ENCODE measurements at regions of chr1 and their contacts with region 1.

Region 1: DNA sequence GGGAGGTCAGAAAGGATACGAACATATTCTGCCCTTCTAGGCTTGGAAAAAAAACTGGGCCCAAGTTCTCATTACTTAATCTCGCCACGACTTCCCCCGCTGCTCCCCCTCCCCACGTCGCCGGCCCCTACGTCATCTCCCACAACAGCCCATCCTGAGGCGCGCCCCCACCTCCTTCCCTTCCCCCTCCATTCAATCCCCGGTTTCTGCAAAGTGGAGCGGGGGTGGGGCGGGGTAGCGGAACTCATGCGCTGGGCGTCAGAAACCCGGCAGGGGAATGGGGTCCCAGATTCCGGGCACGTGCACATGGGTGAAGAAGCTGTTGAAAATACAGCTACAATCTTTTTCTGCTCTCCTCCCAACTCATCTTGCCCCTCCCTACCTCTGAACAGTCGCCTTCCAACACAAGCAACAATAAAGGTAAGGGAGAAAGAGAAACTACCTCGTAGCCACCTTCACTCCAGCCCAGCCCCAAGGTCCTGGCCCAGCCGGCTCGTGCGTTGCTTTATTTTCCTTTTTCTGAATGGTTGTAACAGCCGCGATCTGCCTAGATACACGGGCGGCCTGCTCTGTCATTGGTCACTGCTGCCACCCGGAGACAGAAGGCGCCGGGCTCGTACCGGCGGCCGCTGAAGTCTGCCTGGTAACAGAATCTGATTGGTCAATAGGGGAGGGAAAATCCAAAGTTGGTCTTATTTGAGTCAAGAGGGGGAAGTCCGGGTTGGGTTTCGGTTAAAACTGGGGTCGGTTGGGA is at the start of gene RFX5:
- DNase-seq: peak; percentile 97
- H3K4me3 Mint-ChIP-seq: peak within 1 kb of the TSS; percentile 89
- H3K27ac Mint-ChIP-seq: peak within 1 kb of the TSS; percentile 92
- H3K4me1 Mint-ChIP-seq: peaks cover 32% of the 10 kb centered on the region
- H3K27me3 Mint-ChIP-seq: no peaks in the 10 kb centered on the region
- total RNA-seq, gene RFX5: 64.7 to 68.7 TPM

Region 2: DNA sequence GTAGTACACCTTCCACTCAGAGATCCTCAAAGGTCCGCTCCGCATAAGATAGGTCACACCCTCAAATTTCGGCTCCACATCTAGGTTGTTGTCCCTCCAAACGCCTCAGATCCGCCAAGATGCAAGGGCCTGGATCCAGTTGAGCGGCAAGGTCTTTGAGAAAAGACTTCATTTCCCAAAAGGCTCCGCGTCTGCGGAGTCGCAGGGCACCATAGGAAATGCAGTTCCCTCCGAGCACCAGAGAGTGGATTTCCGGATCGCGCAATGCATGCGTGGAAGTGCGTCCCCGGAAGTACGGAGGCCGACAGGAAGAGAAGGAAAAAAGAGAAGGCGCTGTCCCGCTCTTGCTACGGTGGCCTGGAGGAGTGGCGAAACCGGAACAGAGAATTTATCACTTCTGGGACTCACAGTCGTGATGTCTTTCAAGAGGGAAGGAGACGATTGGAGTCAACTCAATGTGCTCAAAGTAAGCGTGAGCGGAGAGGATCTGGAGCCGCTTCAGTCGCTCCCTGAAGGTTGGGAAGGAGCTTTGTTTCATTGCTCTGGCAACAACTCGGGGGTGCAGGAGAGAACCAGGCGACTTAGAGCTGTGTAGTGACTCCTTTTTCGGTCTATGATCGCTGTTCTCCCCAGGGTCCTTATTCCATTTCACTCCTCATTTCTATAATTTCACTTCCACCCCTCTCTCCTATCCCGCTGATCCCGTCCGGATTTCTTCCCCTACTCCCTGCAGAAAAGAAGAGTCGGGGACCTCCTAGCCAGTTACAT is 181.0 kb before region 1 on chr1 and contains the starts of genes LYSMD1 and SCNM1:
- CTCF ChIA-PET with region 1: no interaction called
- POLR2A ChIA-PET with region 1: no interaction called
- intact Hi-C with region 1: no loop called
- DNase-seq: peak; percentile 99
- H3K4me3 Mint-ChIP-seq: peak within 1 kb of the TSS; percentile 92
- H3K27ac Mint-ChIP-seq: peak within 1 kb of the TSS; percentile 92
- H3K4me1 Mint-ChIP-seq: peaks cover 49% of the 10 kb centered on the region
- H3K27me3 Mint-ChIP-seq: peaks cover 2% of the 10 kb centered on the region
- total RNA-seq, gene LYSMD1: 1.8 to 2.6 TPM
- total RNA-seq, gene SCNM1: 67.5 to 67.8 TPM

Region 3: DNA sequence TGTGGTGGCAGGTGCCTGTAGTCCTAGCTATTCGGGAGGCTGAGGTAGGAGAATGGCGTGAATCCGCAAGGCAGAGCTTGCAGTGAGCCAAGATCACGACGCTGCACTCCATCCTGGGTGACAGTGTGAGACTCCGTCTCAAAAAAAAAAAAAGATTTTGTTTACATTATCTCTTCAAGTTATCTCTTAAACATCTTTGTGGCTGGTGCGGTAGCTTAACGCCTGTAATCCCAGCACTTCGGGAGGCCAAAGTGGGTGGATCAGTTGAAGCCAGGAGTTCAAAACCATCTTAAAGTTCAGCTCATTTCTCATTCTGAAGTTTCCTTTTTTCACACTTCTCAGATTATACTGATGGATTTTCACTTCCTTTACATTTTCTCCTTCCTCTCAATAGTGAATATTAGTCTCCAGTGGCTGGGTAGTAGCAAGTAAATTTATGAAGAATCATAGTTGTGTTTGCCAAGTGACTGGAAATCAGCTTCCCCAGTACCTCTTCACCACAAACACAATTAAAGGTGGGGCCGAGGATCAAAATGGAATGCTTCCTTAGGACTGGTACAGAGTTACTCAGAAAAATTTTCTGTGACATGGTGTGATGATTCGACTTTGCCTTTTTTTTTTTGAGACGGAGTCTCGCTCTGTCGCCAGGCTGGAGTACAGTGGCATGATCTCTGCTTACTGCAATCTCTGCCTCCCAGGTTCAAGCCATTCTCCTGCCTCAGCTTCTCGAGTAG is 134.8 kb before region 1 on chr1:
- CTCF ChIA-PET with region 1: no interaction called
- POLR2A ChIA-PET with region 1: no interaction called
- intact Hi-C with region 1: no loop called
- DNase-seq: peak; percentile 29
- H3K4me3 Mint-ChIP-seq: no peak overlapping the region
- H3K27ac Mint-ChIP-seq: peak overlapping the region; percentile 16
- H3K4me1 Mint-ChIP-seq: peaks cover 27% of the 10 kb centered on the region
- H3K27me3 Mint-ChIP-seq: no peaks in the 10 kb centered on the region

Region 4: DNA sequence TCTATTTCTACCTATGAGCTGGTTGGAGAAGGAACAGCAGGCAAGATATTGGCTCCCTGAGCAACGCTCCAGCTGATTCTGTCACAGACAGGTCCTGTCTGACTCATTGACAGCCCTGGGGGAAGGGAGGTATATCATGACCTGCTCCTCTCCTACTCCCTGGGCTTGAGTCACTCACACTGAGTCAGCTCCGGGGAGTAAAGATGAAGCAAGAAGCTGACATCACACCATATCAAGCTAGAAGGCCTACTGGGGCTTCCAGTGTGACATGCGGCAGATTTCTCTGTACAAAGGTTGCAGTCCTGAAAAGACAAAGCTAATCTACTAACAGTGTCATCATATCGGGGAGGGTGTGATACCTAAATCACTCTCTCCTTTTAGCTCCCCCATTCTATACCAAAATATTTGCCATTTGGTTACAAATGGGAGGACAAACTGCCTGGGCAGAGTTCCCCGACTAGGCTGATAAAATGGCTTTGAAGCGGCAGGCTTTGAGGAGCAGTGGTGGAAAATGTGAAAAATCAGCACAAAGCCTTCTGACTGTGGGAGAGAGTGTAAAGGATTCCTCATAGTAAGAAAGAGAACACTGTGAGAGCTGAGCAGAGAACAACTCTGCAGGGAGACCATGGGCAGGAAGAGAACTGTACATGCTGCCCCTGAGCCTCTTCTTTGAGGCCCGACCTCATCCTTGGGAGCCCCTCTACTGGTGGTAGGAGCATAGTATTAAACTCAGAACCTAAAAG is 35.2 kb before region 1 on chr1:
- CTCF ChIA-PET with region 1: interaction called, 88 read pairs
- POLR2A ChIA-PET with region 1: interaction called, 5 read pairs
- intact Hi-C with region 1: loop called (anchors 1 kb)
- DNase-seq: peak; percentile 91
- H3K4me3 Mint-ChIP-seq: peak overlapping the region; percentile 1
- H3K27ac Mint-ChIP-seq: peak overlapping the region; percentile 97
- H3K4me1 Mint-ChIP-seq: peaks cover 41% of the 10 kb centered on the region
- H3K27me3 Mint-ChIP-seq: no peaks in the 10 kb centered on the region

Region 5: DNA sequence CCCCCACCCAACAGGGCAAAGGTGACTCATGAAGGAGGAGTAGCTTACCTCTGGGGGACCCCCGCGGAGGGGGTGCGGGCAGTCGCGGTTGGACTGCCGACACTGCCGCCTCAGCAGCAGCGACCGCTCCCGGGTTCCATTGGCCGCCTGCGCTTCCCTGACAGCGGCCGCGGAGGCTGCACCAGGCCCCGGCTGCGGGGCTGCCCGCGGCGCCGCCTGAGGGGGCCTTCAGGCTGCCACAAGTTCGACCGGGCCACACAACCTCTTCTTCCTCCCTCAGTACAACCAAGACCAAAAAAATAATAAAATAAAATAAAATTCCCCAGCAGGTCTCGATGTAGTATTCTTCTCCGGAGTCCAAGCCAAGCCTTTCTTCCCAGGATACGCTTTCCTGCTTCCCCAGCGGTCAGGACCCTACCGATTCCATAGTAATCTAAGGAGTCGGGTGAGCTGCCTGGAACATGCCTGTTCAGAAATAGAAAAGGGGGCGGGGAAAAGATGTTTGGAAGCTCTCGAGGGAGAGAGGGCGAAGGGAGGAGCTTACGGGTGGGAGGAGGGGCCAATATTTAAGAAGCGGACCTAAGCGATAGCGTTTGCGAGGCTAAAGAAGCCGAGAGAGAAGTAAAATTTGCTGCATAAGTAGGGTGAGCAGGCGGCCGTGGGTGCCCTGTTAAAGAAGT is 19.6 kb before region 1 on chr1 and contains the start of gene PI4KB:
- CTCF ChIA-PET with region 1: interaction called, 3 read pairs
- POLR2A ChIA-PET with region 1: interaction called, 3 read pairs
- intact Hi-C with region 1: loop called (anchors 1 kb)
- DNase-seq: peak; percentile 93
- H3K4me3 Mint-ChIP-seq: peak within 1 kb of the TSS; percentile 95
- H3K27ac Mint-ChIP-seq: peak within 1 kb of the TSS; percentile 89
- H3K4me1 Mint-ChIP-seq: peaks cover 32% of the 10 kb centered on the region
- H3K27me3 Mint-ChIP-seq: no peaks in the 10 kb centered on the region
- total RNA-seq, gene PI4KB: 54.7 to 62.9 TPM

Region 6: GRCh38 chr1:151399890-151400495 is 53.0 kb after region 1 on chr1:
- CTCF ChIA-PET with region 1: no interaction called
- POLR2A ChIA-PET with region 1: interaction called, 3 read pairs
- intact Hi-C with region 1: loop called (anchors 1 kb)
- DNase-seq: peak; percentile 37
- H3K4me3 Mint-ChIP-seq: peak overlapping the region; percentile 88
- H3K27ac Mint-ChIP-seq: peak overlapping the region; percentile 95
- H3K4me1 Mint-ChIP-seq: peaks cover 29% of the 10 kb centered on the region
- H3K27me3 Mint-ChIP-seq: no peaks in the 10 kb centered on the region

Region 7: DNA sequence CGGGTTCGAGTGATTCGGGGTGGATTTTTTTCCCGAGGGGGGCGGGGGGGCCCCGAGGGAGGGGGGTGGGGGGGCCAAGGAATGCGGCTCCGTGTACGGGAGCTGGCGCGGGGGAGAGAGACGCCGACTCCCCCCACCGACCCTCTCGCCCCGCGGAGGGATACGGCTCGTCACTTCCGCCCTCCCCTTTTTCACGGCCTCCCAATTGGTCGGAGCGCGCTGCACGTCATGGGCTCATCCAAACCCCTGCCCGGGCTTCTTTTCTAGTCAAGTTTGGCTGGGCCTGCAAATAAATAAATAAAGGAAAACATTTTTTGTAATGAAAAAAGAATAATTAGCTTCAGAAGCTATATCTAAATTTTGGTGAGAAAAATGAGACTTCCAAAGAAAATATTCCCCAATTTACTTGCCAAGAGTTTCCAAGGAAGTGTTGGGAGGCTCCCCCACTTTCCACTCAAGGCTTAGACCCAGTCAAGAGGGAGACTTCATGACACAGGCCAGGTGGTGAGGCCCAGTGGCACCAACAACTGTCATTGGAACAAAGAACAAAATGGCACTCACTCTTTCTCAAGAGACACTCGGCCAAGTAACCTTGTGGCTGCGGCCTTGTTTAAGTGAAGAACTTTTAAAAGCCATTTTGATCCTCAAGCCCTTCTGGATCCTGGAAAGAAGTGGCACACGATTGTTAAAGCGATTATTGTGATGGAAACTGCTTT is 112.5 kb after region 1 on chr1 and contains the start of gene POGZ:
- CTCF ChIA-PET with region 1: no interaction called
- POLR2A ChIA-PET with region 1: no interaction called
- intact Hi-C with region 1: loop called (anchors 2 kb)
- DNase-seq: peak; percentile 96
- H3K4me3 Mint-ChIP-seq: peak within 1 kb of the TSS; percentile 85
- H3K27ac Mint-ChIP-seq: peak within 1 kb of the TSS; percentile 91
- H3K4me1 Mint-ChIP-seq: peaks cover 20% of the 10 kb centered on the region
- H3K27me3 Mint-ChIP-seq: peaks cover 16% of the 10 kb centered on the region
- total RNA-seq, gene POGZ: 73.7 to 76.3 TPM

Region 8: GRCh38 chr1:151762941-151763921 is 416.3 kb after region 1 on chr1 and contains the start of gene MRPL9:
- CTCF ChIA-PET with region 1: no interaction called
- POLR2A ChIA-PET with region 1: no interaction called
- intact Hi-C with region 1: loop called (anchors 10 kb)
- DNase-seq: peak; percentile 93
- H3K4me3 Mint-ChIP-seq: peak within 1 kb of the TSS; percentile 78
- H3K27ac Mint-ChIP-seq: peak within 1 kb of the TSS; percentile 86
- H3K4me1 Mint-ChIP-seq: peaks cover 16% of the 10 kb centered on the region
- H3K27me3 Mint-ChIP-seq: no peaks in the 10 kb centered on the region
- total RNA-seq, gene MRPL9: 135 to 154 TPM

Region 9: GRCh38 chr1:151828965-151829698 is 482.2 kb after region 1 on chr1:
- CTCF ChIA-PET with region 1: no interaction called
- POLR2A ChIA-PET with region 1: no interaction called
- intact Hi-C with region 1: loop called (anchors 5 kb)
- DNase-seq: no peak
- H3K4me3 Mint-ChIP-seq: peak overlapping the region; percentile 22
- H3K27ac Mint-ChIP-seq: peak overlapping the region; percentile 86
- H3K4me1 Mint-ChIP-seq: peaks cover 69% of the 10 kb centered on the region
- H3K27me3 Mint-ChIP-seq: no peaks in the 10 kb centered on the region